ENCODE measurements at regions of chr17 and their contacts with region 1.

Region 1: DNA sequence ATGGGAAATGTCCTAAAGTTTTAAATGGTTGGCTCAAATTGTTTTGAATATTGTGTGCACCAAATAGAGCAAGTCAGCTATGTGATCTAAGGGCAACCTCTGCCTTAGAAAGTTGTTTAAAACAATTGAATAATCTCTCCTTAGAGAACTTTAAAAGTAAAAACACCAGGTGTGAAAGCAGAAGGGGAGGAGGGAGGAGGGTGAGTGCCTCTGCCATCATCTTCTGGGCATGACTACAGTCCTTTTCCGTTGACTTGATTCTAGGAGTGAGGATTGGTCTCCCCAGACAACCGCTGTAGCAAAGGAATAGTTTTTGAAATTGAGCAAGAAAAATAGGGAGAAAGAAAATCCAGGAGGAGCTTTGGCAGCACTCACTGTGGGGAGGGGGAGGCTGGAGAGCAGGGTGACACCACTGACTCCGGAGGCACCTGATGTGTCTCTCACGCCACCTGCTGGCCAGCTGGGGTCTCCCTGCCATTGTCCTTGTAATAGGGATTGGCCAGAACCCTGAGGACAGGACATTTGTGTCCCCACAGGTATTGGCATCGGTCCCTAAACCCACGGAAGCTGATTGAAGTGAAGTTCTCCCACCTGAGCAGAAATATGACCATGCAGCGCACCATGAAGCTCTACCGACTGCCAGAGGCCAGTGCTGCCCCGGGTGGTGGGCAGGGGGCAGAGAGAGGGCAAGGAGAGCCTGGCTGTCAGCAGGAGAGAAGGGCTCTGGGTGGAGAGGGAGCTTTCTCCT is 33.3 kb downstream of the PLCD3 start:
- DNase-seq: peak; percentile 89 to 93
- H3K4me3 ChIP-seq: no peak overlapping the region
- H3K4me3 Mint-ChIP-seq: no peak overlapping the region
- H3K27ac Mint-ChIP-seq: no peak overlapping the region
- H3K4me1 ChIP-seq: peaks cover 5% of the 10 kb centered on the region; the same call in 1 of the 2 replicates
- H3K4me1 Mint-ChIP-seq: peaks cover 7% of the 10 kb centered on the region
- H3K27me3 ChIP-seq: no peaks in the 10 kb centered on the region
- H3K27me3 Mint-ChIP-seq: no peaks in the 10 kb centered on the region
- CTCF ChIP-seq: peak; percentile 91 to 92

Region 2: GRCh38 chr17:45119964-45120363 is 20.9 kb after region 1 on chr17:
- CTCF ChIA-PET with region 1: no interaction called
- POLR2A ChIA-PET with region 1: interaction called, 12 read pairs
- intact Hi-C with region 1: no loop called
- DNase-seq: no peak
- H3K4me3 ChIP-seq: no peak overlapping the region
- H3K4me3 Mint-ChIP-seq: no peak overlapping the region
- H3K27ac Mint-ChIP-seq: no peak overlapping the region
- H3K4me1 ChIP-seq: peaks cover 30% of the 10 kb centered on the region
- H3K4me1 Mint-ChIP-seq: peaks cover 13% of the 10 kb centered on the region
- H3K27me3 ChIP-seq: no peaks in the 10 kb centered on the region
- H3K27me3 Mint-ChIP-seq: no peaks in the 10 kb centered on the region
- CTCF ChIP-seq: no peak

Region 3: DNA sequence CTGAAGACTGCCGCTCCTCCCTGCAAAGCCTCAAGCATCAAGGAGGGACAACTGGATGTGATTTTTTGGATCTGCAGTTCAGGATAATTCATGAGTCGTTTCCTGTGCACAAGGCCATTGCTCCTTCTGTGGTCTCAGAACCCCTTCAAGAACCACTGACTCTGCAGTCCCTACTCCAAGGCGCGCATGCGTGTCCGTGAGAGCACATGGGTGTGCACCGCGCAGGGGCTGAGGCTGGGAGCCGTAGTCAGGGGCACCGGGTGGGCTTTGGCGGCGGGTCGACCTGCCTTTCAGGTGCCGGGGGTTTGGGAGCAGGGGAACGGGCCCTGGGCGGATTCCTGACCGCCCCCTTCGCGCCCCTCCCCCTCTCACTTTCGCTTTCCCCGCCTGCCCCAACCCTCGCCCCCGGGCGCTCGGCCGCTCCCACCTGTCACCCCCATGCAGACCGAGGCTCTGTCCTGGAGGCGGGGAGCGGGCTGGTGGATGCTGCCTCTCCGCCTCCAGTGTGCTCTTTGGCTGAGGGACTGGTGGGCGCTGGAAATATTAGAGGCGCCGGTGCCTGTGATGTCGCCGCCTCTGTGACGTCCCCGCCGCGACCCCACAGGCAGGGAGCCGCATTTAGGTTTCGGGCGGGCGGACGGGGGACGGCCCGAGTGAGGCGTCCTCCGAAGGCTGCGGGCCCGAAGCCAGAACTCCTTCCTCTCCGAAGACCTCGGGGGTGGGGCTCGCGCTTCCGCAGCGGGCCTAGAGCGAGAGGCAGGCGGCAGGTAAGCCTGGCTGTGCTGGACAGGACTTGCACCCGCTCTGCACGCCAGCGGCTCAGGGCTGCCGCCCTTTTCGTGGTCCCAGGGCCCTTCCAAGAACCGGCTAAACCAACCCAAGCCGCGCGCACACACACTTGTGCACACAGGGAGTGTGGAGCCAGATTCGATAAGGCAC is 162.8 kb after region 1 on chr17 and contains the start of gene SPATA32:
- CTCF ChIA-PET with region 1: no interaction called
- POLR2A ChIA-PET with region 1: no interaction called
- intact Hi-C with region 1: no loop called
- DNase-seq: no peak
- H3K4me3 ChIP-seq: no peak within 1 kb of the TSS
- H3K4me3 Mint-ChIP-seq: no peak within 1 kb of the TSS
- H3K27ac Mint-ChIP-seq: no peak within 1 kb of the TSS
- H3K4me1 ChIP-seq: peaks cover 3% of the 10 kb centered on the region; the same call in 1 of the 2 replicates
- H3K4me1 Mint-ChIP-seq: no peaks in the 10 kb centered on the region
- H3K27me3 ChIP-seq: no peaks in the 10 kb centered on the region
- H3K27me3 Mint-ChIP-seq: no peaks in the 10 kb centered on the region
- CTCF ChIP-seq: no peak
- total RNA-seq, gene SPATA32: not detected in 2 replicates